ENCODE measurements at regions of chr21 and their contacts with region 1.

Region 1: DNA sequence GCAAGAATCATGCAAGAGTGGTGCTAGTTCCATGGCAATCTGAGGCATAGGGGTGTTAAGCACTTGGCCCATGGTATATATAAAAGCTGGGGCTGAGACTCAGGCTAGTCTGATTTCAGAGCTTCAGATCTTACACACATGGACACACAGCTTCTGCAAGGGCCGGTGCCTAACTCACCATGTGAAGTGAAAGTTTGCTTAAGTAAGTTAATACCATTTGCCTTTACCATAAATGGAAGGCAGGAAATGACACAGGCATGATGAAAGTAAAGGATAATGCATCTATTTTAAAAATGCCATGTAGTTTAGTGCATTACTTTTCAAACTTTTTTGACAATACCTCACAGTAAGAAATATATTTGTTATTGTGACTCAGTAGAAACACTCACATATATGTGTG is 122.6 kb downstream of the KCNJ6 start:
- DNase-seq: no peak
- ATAC-seq: no peak

Region 2: GRCh38 chr21:37771181-37771580 is 22.5 kb before region 1 on chr21:
- intact Hi-C with region 1: loop called (anchors 1 kb)
- DNase-seq: no peak
- ATAC-seq: no peak